Heart left ventricle (tissue), 16 donors: ENCODE measurements at regions of chr22 and their contacts with region 1.

Region 1: GRCh38 chr22:26883393-26883792 is 226.0 kb downstream of the MIAT start:
- DNase-seq: no peak
- ATAC-seq: no peak
- H3K4me3 ChIP-seq: no peak overlapping the region
- H3K27ac ChIP-seq: no peak overlapping the region
- H3K4me1 ChIP-seq: peaks cover 0 to 16% (median 0%) of the 10 kb centered on the region in 12 donors
- H3K27me3 ChIP-seq: no peaks in the 10 kb centered on the region
- CTCF ChIP-seq: no peak
- POLR2A ChIP-seq: no peak

Region 2: GRCh38 chr22:26669060-26669481 is 214.3 kb before region 1 on chr22:
- intact Hi-C with region 1: no loop called
- DNase-seq: no peak
- ATAC-seq: no peak
- H3K4me3 ChIP-seq: no peak overlapping the region
- H3K27ac ChIP-seq: no peak overlapping the region
- H3K4me1 ChIP-seq: peaks cover 0 to 37% (median 14%) of the 10 kb centered on the region in 12 donors
- H3K27me3 ChIP-seq: peaks cover 0 to 4% (median 0%) of the 10 kb centered on the region in 9 donors
- CTCF ChIP-seq: peak in 6 of 12 donors; percentile 11 to 42 (median 32)
- POLR2A ChIP-seq: no peak

Region 3: DNA sequence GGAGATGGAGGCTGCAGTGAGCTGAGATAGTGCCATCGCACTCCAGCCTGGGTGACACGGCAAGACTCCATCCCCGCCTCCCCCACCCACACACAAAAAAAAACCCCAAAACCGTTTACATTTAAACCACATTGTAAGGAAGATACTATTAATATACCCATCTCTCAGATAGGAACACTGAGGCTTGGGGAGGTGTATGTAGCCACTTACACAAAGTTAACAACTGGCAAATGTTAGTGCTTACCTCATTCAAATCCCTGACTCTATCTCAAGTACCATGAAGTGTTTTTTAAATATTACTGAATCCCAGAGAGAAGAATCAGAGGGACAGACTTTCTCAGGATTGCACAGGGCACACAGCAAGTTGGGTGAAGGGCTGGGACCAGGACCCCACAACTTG is 61.5 kb before region 1 on chr22:
- intact Hi-C with region 1: loop called in 1 of 10 experiments (anchors 2 kb)
- DNase-seq: no peak
- ATAC-seq: no peak
- H3K4me3 ChIP-seq: no peak overlapping the region
- H3K27ac ChIP-seq: no peak overlapping the region
- H3K4me1 ChIP-seq: no peaks in the 10 kb centered on the region
- H3K27me3 ChIP-seq: no peaks in the 10 kb centered on the region
- CTCF ChIP-seq: no peak
- POLR2A ChIP-seq: no peak